Activated CD4-positive, alpha-beta memory T cell treated with anti-CD3 and anti-CD28 coated beads for 36 hours (primary cell): ENCODE measurements at regions of chr7 and their contacts with region 1.

Region 1: DNA sequence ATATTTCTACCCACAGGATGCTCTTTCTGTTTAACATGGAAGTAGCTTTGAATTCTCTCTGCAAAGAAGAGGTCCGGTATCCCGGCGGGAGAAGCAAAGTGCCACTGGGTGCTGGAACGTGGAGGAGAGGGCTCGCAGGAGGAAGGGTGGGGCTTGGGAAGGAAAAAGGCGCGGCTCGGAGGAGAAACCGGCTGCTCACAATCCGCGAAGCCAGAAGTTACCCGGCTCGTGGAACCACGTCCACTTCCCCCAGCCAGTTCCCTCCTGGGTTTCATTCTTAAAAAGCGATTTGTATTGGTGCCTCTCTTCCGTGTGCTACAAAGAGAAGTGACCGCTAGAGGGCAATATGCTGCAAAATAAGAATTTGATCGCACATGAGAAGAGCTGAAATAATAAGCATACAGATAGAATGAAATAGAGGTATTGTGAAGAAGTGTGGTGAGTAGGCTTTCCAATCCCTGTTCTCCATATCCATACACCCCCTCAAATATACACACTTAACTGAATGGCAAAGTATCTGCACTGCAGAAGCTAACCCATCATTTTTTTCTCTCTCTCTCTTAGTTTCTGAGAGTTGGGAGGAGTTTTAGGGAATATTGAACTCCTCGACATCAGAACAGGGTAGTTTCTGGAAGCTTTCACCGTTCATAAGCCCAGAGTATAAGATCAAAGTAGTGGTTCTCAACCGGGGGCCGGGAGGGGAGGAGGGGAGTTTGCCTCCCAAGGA is 31.1 kb downstream of the TRIL start:
- DNase-seq: peak; percentile 60
- H3K4me3 Mint-ChIP-seq: peak overlapping the region; percentile 74
- H3K27ac Mint-ChIP-seq: no peak overlapping the region
- H3K4me1 Mint-ChIP-seq: peaks cover 24% of the 10 kb centered on the region
- H3K27me3 Mint-ChIP-seq: peaks cover 18% of the 10 kb centered on the region

Region 2: GRCh38 chr7:28939844-28940544 is 13.0 kb after region 1 on chr7:
- CTCF ChIA-PET with region 1: interaction called, 40 read pairs
- POLR2A ChIA-PET with region 1: no interaction called
- intact Hi-C with region 1: no loop called
- DNase-seq: no peak
- H3K4me3 Mint-ChIP-seq: no peak overlapping the region
- H3K27ac Mint-ChIP-seq: no peak overlapping the region
- H3K4me1 Mint-ChIP-seq: no peaks in the 10 kb centered on the region
- H3K27me3 Mint-ChIP-seq: peaks cover 13% of the 10 kb centered on the region

Region 3: GRCh38 chr7:28955718-28956619 is 28.9 kb after region 1 on chr7:
- CTCF ChIA-PET with region 1: interaction called, 96 read pairs
- POLR2A ChIA-PET with region 1: no interaction called
- intact Hi-C with region 1: loop called (anchors 1 kb)
- DNase-seq: peak; percentile 47
- H3K4me3 Mint-ChIP-seq: peak overlapping the region; percentile 20
- H3K27ac Mint-ChIP-seq: no peak overlapping the region
- H3K4me1 Mint-ChIP-seq: peaks cover 9% of the 10 kb centered on the region
- H3K27me3 Mint-ChIP-seq: peaks cover 65% of the 10 kb centered on the region

Region 4: GRCh38 chr7:29105752-29106668 is 179.0 kb after region 1 on chr7:
- CTCF ChIA-PET with region 1: interaction called, 231 read pairs
- POLR2A ChIA-PET with region 1: no interaction called
- intact Hi-C with region 1: loop called (anchors 1 kb)
- DNase-seq: peak; percentile 12
- H3K4me3 Mint-ChIP-seq: no peak overlapping the region
- H3K27ac Mint-ChIP-seq: no peak overlapping the region
- H3K4me1 Mint-ChIP-seq: peaks cover 4% of the 10 kb centered on the region
- H3K27me3 Mint-ChIP-seq: peaks cover 7% of the 10 kb centered on the region

Region 5: DNA sequence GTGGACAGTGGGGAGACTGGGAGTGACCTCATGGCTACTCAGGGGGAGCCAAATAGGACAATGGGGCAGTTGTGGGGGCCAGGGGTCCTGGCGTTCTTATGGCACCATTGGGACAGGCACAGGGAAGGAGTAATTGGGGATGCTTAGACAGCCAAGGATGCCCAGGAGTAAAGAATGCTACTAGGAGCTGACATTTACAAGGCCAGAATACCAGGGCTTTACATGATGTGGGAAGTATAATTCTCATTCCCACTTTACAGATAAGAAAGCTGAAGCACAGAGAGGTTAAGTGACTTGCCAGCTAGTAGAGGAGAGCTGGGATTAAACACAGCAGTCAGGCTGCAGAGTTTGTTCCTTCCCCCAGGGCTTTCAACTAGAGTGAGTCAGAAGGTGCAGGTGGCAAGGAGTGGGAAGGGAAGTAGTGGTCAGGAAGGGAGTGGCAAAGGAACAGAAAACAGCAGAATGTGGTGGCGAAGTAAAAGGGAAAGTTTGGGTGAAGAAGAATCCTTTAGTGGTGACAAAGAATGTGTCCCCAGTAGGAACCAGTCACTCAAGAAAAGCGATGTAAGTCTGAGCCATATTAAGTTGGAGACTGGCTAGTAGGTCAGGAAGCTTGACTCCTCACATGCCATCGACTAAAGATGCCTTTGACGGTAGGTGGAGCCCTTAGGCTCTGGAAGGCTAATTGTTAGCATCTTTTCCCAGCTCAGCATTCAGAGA is 186.5 kb after region 1 on chr7:
- CTCF ChIA-PET with region 1: interaction called, 231 read pairs
- POLR2A ChIA-PET with region 1: no interaction called
- intact Hi-C with region 1: no loop called
- DNase-seq: peak; percentile 36
- H3K4me3 Mint-ChIP-seq: no peak overlapping the region
- H3K27ac Mint-ChIP-seq: no peak overlapping the region
- H3K4me1 Mint-ChIP-seq: peaks cover 11% of the 10 kb centered on the region
- H3K27me3 Mint-ChIP-seq: peaks cover 22% of the 10 kb centered on the region

Region 6: DNA sequence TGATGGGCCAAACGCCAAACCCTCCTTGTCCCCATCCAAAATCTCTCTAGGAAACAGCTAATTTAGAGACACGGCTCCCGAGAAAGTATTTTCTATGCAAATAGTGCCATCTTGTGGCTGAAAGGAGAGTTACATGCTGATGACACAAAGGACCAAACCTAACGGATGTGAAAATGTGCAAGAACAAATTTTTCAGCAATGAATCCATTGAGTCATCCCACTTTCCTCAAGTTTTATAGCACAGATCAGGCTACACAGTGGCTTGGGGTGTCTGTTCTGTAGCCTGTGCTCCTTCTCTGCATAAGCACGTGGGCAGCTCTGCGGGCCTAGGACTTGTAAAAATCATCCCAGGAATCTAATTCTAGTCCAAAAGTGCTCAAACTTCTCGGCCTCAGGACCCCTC is 481.8 kb after region 1 on chr7:
- CTCF ChIA-PET with region 1: interaction called, 230 read pairs
- POLR2A ChIA-PET with region 1: no interaction called
- intact Hi-C with region 1: loop called (anchors 1 kb)
- DNase-seq: peak; percentile 41
- H3K4me3 Mint-ChIP-seq: no peak overlapping the region
- H3K27ac Mint-ChIP-seq: no peak overlapping the region
- H3K4me1 Mint-ChIP-seq: no peaks in the 10 kb centered on the region
- H3K27me3 Mint-ChIP-seq: peaks cover 3% of the 10 kb centered on the region

Region 7: DNA sequence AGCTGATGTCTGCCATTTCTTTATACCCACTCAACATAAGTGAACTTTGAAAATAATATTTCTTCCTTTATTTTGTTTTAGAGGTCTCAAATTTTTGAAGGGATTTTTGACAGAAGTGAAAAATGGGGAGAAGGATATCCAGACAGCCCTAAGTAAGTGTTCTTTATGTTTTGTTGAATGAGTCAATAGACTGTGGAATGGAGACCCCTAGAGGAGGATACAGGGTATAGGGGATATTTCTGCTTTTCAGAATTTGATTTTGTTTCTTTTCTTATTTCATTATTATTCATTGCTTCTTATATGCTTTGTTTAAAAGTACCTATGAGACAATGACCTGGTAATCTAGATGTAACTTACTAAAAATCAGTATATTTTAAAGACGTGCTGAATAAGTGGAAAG is 1135.6 kb after region 1 on chr7:
- CTCF ChIA-PET with region 1: interaction called, 3 read pairs
- POLR2A ChIA-PET with region 1: no interaction called
- intact Hi-C with region 1: loop called (anchors 10 kb)
- DNase-seq: no peak
- H3K4me3 Mint-ChIP-seq: no peak overlapping the region
- H3K27ac Mint-ChIP-seq: no peak overlapping the region
- H3K4me1 Mint-ChIP-seq: no peaks in the 10 kb centered on the region
- H3K27me3 Mint-ChIP-seq: no peaks in the 10 kb centered on the region